Endothelial cell of umbilical vein (primary cell): ENCODE measurements at regions of chr22 and their contacts with region 1.

Region 1: DNA sequence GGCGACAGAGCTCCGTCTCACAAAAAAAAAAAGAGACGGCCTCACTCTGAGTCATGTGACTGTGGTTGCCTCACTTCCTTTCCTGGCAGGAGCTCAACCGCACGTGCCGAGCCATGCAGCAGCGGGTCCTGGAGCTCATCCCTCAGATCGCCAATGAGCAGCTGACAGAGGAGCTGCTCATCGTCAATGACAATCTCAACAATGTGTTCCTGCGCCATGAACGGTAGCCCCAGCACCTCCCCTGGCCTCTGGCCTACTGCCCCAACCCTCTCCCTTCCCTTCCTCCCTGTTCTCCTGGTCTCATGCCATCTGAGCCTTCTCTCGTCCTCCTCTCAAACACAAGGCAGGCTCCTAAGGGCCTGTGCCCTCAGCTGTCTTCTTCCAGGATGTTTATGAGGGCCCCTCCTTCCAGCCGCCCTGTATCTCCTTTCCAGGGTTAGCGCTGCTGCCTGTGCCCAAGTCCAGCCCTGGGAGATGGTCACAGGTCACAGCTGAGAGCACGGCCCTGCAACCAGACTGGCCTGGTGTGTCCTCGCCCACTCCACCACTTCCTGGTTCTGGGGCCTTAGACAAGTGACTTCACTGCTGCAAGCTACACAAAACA is 30.7 kb downstream of the TOM1 start:
- DNase-seq: peak; percentile 65
- H3K4me3 ChIP-seq: no peak overlapping the region
- H3K27ac ChIP-seq: peak overlapping the region; percentile 38
- H3K4me1 ChIP-seq: peaks cover 20% of the 10 kb centered on the region
- H3K27me3 ChIP-seq: no peaks in the 10 kb centered on the region
- CTCF ChIP-seq: no peak
- POLR2A ChIP-seq: no peak

Region 2: GRCh38 chr22:35275580-35275979 is 54.8 kb before region 1 on chr22:
- CTCF ChIA-PET with region 1: no interaction called
- POLR2A ChIA-PET with region 1: no interaction called
- dilution Hi-C with region 1: no loop called
- intact Hi-C with region 1: no loop called
- DNase-seq: no peak
- H3K4me3 ChIP-seq: no peak overlapping the region
- H3K27ac ChIP-seq: no peak overlapping the region
- H3K4me1 ChIP-seq: no peaks in the 10 kb centered on the region
- H3K27me3 ChIP-seq: no peaks in the 10 kb centered on the region
- CTCF ChIP-seq: no peak
- POLR2A ChIP-seq: no peak

Region 3: GRCh38 chr22:35306350-35306967 is 23.9 kb before region 1 on chr22:
- CTCF ChIA-PET with region 1: interaction called, 10 read pairs
- POLR2A ChIA-PET with region 1: interaction called, 3 read pairs
- dilution Hi-C with region 1: no loop called
- intact Hi-C with region 1: no loop called
- DNase-seq: peak; percentile 87
- H3K4me3 ChIP-seq: no peak overlapping the region
- H3K27ac ChIP-seq: peak overlapping the region; percentile 96
- H3K4me1 ChIP-seq: peaks cover 31% of the 10 kb centered on the region
- H3K27me3 ChIP-seq: no peaks in the 10 kb centered on the region
- CTCF ChIP-seq: no peak
- POLR2A ChIP-seq: peak; percentile 46

Region 4: DNA sequence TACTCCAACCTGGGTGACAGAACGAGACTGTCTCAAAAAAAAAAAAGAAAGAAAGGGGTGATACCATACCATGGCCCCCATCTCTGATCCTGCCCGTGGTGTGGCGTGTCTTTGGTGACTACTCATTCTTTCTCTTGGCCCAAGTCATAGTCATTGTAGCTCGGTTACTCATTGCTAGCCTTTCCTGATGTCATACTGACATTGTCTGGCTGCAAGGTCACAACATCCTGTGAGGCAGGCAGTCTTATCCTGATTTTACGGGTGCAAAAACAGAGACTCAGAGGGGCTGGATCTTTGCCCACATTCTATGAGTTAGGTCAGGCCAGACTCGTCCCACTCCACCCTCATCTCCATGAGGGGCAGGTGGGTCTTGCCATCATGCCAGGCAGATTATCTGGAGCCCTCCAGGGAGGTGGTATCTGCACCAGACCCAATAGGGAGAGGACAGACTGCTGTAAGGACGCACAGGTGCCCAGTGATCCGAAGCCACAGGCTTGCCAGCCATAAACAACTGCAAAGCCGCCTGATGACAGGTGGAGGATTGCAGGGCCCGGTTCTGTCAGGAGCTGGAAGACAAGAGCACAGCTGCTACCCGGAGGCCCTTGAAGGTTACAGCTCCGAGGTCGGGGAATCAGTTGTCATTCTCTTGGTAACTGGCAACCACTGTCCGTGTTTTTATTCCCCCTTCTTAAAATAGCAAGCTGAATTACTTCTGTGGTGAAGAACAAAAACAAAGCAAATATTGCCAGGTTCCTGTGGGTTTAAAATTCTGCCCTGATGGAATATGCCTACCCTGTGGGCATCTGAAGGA is 16.8 kb before region 1 on chr22:
- CTCF ChIA-PET with region 1: interaction called, 17 read pairs
- POLR2A ChIA-PET with region 1: interaction called, 5 read pairs
- dilution Hi-C with region 1: no loop called
- intact Hi-C with region 1: loop called (anchors 1 kb)
- DNase-seq: peak; percentile 93
- H3K4me3 ChIP-seq: no peak overlapping the region
- H3K27ac ChIP-seq: peak overlapping the region; percentile 98
- H3K4me1 ChIP-seq: peaks cover 37% of the 10 kb centered on the region
- H3K27me3 ChIP-seq: no peaks in the 10 kb centered on the region
- CTCF ChIP-seq: no peak
- POLR2A ChIP-seq: no peak

Region 5: GRCh38 chr22:35357883-35358621 is 27.7 kb after region 1 on chr22:
- CTCF ChIA-PET with region 1: no interaction called
- POLR2A ChIA-PET with region 1: no interaction called
- dilution Hi-C with region 1: no loop called
- intact Hi-C with region 1: no loop called
- DNase-seq: no peak
- H3K4me3 ChIP-seq: no peak overlapping the region
- H3K27ac ChIP-seq: no peak overlapping the region
- H3K4me1 ChIP-seq: peaks cover under 1% of the 10 kb centered on the region
- H3K27me3 ChIP-seq: no peaks in the 10 kb centered on the region
- CTCF ChIP-seq: no peak
- POLR2A ChIP-seq: no peak